Activated T-helper 2 cell treated with anti-CD3 and anti-CD28 coated beads, Interferon-gamma antibody, Interleukin-2, Interleukin-4, amounts not matched to agents 10 μg/mL and 5 μg/mL and 100 μg/mL, durations not matched to agents 14 hours and 24 hours and 36 hours (primary cell): ENCODE measurements at regions of chr2 and their contacts with region 1.

Region 1: DNA sequence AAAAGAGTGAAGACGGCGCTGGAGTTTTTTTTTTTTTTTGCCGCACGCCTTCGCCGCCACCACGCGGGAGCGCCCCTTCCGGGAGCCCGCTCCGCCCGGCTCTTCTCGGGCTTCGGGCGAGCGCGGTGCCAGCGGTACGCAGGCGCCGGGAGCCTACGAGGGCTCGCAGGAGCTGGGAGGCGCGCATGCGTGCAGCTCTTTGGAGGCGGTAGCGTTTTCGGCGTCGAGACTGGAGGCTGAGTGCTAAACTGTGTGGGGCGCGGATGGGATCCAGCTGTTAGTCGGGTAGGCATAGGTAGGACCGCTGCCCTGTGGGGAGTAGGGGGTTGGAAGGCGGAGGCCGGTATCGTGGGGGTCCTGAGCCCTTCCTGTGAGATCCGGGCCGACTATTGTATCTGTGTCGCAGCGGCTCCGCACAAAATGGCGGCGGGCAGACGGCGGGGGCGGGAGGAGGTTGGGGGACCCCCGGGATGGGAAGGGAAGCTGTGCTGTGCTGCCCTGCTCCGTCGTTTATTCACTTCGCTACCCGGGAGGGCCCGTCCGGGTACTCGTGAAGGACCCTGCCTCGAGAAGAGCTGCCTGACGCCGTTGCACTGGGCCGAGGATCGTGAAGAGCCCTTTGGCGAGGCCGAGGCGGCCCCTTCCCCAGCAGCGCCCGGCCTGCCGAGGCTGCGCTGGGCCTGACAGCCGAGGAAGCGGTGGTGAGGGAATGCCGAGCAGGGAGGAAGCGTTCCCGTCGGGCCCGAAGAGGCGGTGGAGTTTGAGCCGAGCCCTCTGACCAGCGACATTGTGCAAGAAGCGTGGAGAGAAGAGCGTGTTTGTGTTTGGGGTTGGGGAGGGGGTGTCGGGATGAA is at the start of gene ZNF638:
- DNase-seq: peak; percentile 89
- H3K4me3 Mint-ChIP-seq: peak within 1 kb of the TSS; percentile 99
- H3K27ac Mint-ChIP-seq: peak within 1 kb of the TSS; percentile 100
- H3K4me1 Mint-ChIP-seq: peaks cover 17% of the 10 kb centered on the region
- H3K27me3 Mint-ChIP-seq: peaks cover 11% of the 10 kb centered on the region
- total RNA-seq, gene ZNF638: 96.5 and 97.6 TPM in 2 replicates

Region 2: DNA sequence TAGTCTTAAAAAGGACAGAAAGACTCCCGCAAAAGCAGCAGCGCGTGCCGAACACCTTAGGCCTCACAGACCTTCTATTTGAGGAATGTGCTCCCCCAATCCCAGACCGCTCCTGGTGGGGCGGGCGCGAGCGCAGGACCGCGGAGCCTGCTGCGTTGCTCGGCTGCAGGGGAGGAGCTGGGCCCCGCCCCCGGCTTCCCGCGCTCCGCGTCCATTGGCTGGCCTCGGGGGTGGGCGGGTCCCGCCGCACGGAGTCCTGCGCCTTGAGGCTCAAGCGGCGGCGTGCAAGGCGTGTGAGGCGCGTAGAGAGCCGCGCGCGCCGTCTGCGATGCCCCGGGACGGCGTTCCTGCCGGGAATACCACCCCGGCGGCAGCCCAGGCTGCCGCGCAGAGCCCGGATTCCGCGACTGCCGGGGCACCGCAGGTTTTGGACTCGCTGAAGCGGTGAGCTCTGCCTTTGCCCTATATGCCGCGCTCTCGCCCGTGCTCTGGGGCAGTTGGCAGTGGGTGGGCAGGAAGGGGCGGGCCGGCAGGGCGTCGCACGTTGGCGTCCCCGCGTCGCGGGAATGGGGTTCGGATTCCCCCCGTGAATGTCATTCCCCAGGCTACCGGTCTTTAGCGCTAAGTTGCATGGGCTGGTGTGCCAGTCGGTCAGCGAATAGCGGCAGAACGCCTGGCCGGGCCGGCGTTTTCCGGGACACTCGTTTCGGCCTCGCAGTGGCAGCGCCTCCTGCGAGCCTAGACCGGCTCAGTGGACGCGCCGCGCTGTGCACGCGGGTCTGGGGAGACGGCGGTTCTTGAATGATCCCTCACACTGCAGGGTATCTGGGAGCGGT is 55.3 kb before region 1 on chr2:
- intact Hi-C with region 1: loop called (anchors 2 kb)
- DNase-seq: peak; percentile 85
- H3K4me3 Mint-ChIP-seq: peak overlapping the region; percentile 72
- H3K27ac Mint-ChIP-seq: no peak overlapping the region
- H3K4me1 Mint-ChIP-seq: peaks cover 9% of the 10 kb centered on the region
- H3K27me3 Mint-ChIP-seq: peaks cover 76% of the 10 kb centered on the region

Region 3: GRCh38 chr2:71291398-71291797 is 40.4 kb before region 1 on chr2:
- intact Hi-C with region 1: no loop called
- DNase-seq: no peak
- H3K4me3 Mint-ChIP-seq: no peak overlapping the region
- H3K27ac Mint-ChIP-seq: no peak overlapping the region
- H3K4me1 Mint-ChIP-seq: no peaks in the 10 kb centered on the region
- H3K27me3 Mint-ChIP-seq: peaks cover 6% of the 10 kb centered on the region

Region 4: GRCh38 chr2:73202156-73203054 is 1870.6 kb after region 1 on chr2 and contains the start of gene NOTO:
- intact Hi-C with region 1: no loop called
- DNase-seq: no peak
- H3K4me3 Mint-ChIP-seq: peak within 1 kb of the TSS; percentile 13
- H3K27ac Mint-ChIP-seq: no peak within 1 kb of the TSS
- H3K4me1 Mint-ChIP-seq: no peaks in the 10 kb centered on the region
- H3K27me3 Mint-ChIP-seq: peaks cover 43% of the 10 kb centered on the region
- total RNA-seq, gene NOTO: not detected in 2 replicates